ENCODE measurements at regions of chr7 and their contacts with region 1.

Region 1: GRCh38 chr7:92833024-92833765 is 3.2 kb downstream of the CDK6 start:
- DNase-seq: peak; percentile 93
- H3K4me3 ChIP-seq: peak overlapping the region; percentile 77
- H3K27ac ChIP-seq: peak overlapping the region; percentile 86
- H3K4me1 ChIP-seq: peaks cover 30% of the 10 kb centered on the region
- CTCF ChIP-seq: peak; percentile 81

Region 2: DNA sequence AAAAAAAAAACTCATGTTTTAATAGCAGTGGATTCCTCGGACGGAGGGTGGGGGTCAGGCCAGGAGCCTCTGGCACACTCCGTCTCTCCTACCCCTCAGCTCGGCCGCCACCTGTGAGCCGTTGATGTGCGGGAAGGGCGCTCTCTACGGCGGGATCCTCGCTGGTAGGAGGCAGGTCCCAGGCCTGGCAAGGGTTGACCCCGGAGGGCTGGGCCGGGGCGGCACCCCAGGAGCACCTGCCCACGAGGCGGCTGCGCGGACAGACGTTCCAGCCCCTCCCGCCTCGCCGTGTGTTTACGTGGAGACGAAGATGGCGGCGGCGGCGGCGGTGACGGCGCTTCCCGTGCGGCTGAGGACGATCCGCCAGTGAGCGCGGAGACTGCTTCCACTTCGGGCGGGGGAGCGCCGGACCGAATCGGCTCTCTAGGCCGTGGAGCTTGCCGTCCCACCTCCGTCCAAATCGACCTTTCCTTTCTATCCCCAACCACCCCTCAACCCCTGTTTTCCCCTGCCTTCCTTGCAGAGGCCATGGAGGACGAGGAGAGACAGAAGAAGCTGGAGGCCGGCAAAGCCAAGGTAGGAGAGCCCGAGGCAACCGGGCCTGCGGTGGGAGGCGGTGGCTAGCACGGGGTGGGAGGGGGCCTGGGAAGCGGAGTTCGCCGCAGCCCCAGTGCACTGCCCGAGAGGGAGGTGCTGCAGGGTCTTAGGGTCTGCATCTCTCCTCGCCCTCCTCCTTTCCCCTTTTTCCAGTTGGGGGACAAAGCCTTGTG is 892.4 kb before region 1 on chr7 and contains the start of gene AKAP9:
- CTCF ChIA-PET with region 1: no interaction called
- POLR2A ChIA-PET with region 1: no interaction called
- intact Hi-C with region 1: loop called (anchors 10 kb)
- DNase-seq: peak; percentile 91
- H3K4me3 ChIP-seq: peak within 1 kb of the TSS; percentile 93
- H3K27ac ChIP-seq: peak within 1 kb of the TSS; percentile 74
- H3K4me1 ChIP-seq: peaks cover 21% of the 10 kb centered on the region
- CTCF ChIP-seq: no peak
- total RNA-seq, gene AKAP9: 32.6 and 48.7 TPM in 2 replicates

Region 3: DNA sequence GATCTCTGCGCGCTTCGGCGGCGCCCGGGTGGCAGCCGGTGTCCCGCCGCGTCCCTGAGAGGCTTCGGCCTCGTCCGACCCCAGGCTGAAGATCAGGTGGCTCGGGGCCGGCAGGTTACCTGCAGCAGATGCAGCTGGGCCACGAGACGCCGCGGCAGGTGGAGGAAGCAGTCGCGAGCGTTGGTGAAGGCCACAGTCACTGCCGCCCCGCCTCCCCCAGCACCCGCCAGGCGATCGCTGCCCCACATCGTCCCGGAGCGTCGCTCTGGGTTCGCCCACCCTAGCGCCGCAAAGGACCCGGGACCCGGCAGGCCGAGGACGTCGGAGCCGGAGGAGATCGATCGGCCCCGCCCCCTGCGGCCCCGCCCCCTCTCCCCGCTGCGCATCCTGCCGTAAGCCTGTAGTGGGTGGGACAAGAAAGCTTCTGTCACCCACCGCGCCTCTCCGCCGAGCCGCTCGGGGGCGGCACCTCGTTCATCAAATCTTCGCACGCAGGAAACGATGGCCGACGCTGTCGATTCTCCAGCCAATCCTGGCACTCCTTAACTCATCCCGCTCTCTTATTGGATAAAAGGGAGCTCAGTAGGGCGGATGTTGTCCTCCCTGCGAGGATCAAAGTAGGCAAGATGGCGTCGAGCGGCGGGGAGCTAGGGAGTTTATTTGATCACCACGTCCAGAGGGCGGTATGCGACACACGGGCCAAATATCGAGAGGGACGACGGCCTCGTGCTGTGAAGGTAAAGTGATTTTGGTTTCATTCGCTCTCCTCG is 304.8 kb before region 1 on chr7 and contains the starts of genes PEX1 and RBM48:
- CTCF ChIA-PET with region 1: interaction called, 6 read pairs
- POLR2A ChIA-PET with region 1: interaction called, 3 read pairs
- intact Hi-C with region 1: loop called (anchors 1 kb)
- DNase-seq: peak; percentile 99
- H3K4me3 ChIP-seq: peak within 1 kb of the TSS; percentile 84
- H3K27ac ChIP-seq: peak within 1 kb of the TSS; percentile 81
- H3K4me1 ChIP-seq: peaks cover 14% of the 10 kb centered on the region
- CTCF ChIP-seq: peak; percentile 78
- total RNA-seq, gene PEX1: 28.3 and 28.7 TPM in 2 replicates
- total RNA-seq, gene RBM48: 7.7 and 10.7 TPM in 2 replicates

Region 4: GRCh38 chr7:92691578-92691977 is 141.6 kb before region 1 on chr7:
- CTCF ChIA-PET with region 1: no interaction called
- POLR2A ChIA-PET with region 1: no interaction called
- intact Hi-C with region 1: loop called (anchors 1 kb)
- DNase-seq: peak; percentile 75
- H3K4me3 ChIP-seq: no peak overlapping the region
- H3K27ac ChIP-seq: no peak overlapping the region
- H3K4me1 ChIP-seq: peaks cover 4% of the 10 kb centered on the region
- CTCF ChIP-seq: peak; percentile 90

Region 5: DNA sequence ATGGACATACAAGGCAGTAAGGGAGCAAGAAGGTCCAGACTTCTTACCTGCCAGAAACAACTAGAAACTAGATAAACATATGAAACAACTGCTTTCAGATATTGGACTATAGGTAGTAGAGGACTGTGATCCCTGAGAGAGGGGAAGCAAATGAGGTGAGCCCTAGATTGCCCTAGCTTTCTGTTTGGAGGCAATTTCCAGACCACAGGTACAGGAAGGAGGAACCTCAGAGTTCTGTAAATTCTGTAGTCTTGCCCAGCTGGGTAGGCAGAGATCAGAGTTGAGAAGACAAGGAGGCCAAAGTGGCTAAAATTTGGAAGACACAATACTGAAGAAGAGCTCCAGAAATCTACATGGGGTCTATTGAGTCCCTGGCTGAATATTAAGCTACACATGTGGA is 17.8 kb before region 1 on chr7:
- CTCF ChIA-PET with region 1: interaction called, 5 read pairs
- POLR2A ChIA-PET with region 1: interaction called, 45 read pairs
- intact Hi-C with region 1: loop called (anchors 1 kb)
- DNase-seq: no peak
- H3K4me3 ChIP-seq: peak overlapping the region; percentile 22
- H3K27ac ChIP-seq: peak overlapping the region; percentile 100
- H3K4me1 ChIP-seq: peaks cover 60% of the 10 kb centered on the region
- CTCF ChIP-seq: no peak

Region 6: GRCh38 chr7:93055543-93056107 is 222.4 kb after region 1 on chr7:
- CTCF ChIA-PET with region 1: no interaction called
- POLR2A ChIA-PET with region 1: no interaction called
- intact Hi-C with region 1: loop called (anchors 10 kb)
- DNase-seq: peak; percentile 54
- H3K4me3 ChIP-seq: no peak overlapping the region
- H3K27ac ChIP-seq: no peak overlapping the region
- H3K4me1 ChIP-seq: no peaks in the 10 kb centered on the region
- CTCF ChIP-seq: peak; percentile 92

Measured in OCI-LY7 (cell line).